ENCODE measurements at regions of chr2 and their contacts with region 1.

Region 1: DNA sequence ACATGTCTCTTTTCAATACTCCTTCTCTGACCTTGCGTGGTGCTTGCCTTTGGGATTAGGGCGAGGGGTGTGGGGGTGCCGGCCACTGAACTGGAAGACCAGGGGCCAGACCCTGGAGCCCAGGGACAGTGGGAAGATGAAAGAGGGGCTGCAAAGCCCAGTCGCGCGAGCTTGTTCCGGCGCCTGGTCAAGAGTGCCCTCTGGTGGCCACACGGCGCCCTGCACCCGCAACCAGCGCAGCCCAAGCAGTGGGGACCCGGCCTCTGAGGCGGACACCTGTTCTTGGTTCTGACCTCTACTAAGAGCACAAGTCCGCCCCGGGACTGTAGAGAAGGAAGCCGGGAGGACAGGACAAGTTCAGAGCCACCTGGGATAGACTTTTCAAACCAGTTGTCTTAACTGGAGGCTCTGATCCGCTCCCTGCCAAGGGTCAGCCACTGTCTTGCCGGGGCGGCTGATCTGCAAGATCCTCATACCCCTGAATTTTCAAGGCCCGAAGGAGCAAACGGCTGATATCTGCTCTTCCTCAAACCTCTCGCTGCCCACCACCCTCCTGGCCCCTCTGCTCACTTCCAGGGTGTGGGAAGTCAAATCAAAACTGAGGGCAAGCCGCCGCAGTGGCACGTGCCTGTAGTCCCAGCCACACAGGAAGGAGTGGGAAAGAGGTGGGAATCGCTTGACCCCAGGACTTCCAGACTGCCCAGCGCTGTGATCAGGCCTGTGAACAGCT is 14.9 kb upstream of the MSH6 start:
- DNase-seq: peak; percentile 91
- ATAC-seq: peak; percentile 88

Region 2: DNA sequence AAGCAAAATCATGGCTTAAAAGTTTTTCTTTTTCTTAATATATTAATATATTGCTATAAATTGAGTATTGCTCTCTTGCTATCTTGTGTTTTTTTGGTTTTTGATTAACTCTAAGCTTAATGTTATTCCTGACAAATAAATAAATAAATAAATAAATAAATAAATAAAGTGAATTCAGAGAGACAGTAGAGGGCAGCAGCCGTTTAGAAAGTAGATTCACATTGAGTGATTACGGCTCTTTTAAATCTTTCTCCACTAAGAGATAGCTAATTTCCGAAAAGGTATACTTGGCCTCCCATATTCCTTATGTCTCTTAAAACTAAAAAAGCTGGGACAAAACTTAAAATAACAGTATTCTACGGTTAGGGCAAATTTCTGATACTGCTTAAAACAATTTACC is 330.8 kb before region 1 on chr2:
- intact Hi-C with region 1: loop called (anchors 2 kb)
- DNase-seq: no peak
- ATAC-seq: no peak

Region 3: DNA sequence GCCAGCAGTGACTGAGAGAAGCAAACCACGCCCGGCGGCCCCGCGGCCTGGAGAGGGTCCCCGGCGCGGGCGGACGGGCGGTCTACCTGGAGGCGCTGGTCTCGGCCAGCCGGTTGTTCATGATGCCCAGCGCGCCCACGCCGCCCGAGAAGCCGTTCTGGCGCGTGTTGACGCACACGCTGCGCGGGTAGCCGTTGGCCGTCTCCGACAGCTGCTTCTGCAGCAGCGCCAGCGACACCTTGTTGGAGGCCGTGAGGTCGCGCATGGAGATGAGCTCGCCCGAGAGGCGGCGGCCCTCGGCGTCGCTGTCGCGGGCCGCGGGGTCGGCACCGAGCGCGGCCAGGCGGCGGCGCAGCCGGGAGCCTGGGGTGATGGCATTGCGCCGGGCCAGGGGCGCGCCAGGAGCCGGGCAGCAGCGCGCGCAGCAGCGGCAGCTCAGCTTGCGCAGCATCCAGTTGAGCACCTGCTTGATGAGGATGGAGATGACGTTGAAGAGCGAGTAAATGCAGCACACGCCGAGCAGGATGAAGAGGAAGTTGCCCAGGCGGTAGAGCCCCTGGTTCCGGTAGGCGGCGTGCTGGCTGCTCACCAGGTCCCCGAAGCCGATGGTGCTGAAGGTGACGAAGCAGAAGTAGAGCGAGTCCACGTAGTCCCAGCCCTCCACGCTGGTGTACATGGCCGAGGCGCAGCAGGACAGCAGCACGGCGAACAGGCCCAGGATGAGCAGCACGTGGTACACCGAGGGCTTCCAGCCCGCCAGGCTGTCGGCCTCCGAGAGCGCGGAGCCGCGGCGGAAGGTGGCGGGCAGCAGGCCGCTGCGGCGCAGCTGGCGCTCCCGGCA is 247.0 kb before region 1 on chr2:
- intact Hi-C with region 1: loop called (anchors 5 kb)
- DNase-seq: peak; percentile 84
- ATAC-seq: peak; percentile 49

Region 4: DNA sequence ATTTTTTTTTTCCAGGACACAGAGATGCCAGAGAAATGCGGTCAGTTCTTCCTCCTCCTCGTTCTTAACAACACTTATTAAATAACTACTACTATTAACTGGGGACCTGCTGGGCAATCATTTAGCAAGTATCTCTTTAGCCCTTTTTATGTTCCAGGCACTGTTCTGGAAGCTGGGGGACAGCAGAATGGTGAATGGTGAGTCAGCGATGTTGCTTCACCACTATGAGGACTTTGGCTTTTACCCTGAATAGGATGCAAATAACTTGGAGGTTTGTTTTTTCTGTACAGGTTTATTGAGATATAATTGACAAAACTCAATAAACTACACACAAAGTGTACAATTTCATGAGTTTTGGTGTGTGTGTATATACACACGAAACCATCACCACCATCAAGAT is 165.0 kb before region 1 on chr2:
- intact Hi-C with region 1: no loop called
- DNase-seq: no peak
- ATAC-seq: no peak

Measured in Right ventricle myocardium inferior (tissue), 1 donor.